ENCODE measurements at regions of chr10 and their contacts with region 1.

Region 1: GRCh38 chr10:29836396-29836795 is 201.6 kb upstream of the SVIL start:
- DNase-seq: no peak
- ATAC-seq: no peak
- H3K4me3 ChIP-seq: no peak overlapping the region
- H3K27ac ChIP-seq: no peak overlapping the region
- H3K4me1 ChIP-seq: peaks cover 4% of the 10 kb centered on the region
- H3K27me3 ChIP-seq: no peaks in the 10 kb centered on the region
- CTCF ChIP-seq: no peak

Region 2: DNA sequence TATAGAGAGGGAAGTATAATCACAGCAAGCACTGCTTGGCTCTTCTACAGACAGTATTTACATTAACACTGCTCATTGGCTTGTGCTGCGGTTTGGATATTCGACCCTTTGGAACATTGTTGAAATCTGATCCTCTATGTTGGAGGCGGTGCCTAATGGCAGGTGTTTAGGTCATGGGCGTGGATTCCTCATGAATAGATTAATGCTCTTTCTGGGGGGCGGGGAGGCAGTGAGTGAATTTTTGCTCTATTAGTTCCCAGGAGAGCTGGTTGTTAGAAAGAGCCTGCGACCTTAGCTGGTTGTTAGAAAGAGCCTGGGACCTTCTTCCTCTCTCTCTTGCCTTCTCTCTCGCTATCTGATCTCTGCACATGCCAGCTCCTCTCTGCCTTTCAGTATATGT is 124.3 kb before region 1 on chr10:
- CTCF ChIA-PET with region 1: interaction called, 10 read pairs
- POLR2A ChIA-PET with region 1: no interaction called
- in situ Hi-C with region 1: no loop called
- intact Hi-C with region 1: no loop called
- DNase-seq: no peak
- ATAC-seq: no peak
- H3K4me3 ChIP-seq: no peak overlapping the region
- H3K27ac ChIP-seq: no peak overlapping the region
- H3K4me1 ChIP-seq: peaks cover 15% of the 10 kb centered on the region
- H3K27me3 ChIP-seq: no peaks in the 10 kb centered on the region
- CTCF ChIP-seq: no peak